PC-3 (cell line): ENCODE measurements at regions of chr17 and their contacts with region 1.

Region 1: GRCh38 chr17:75855310-75856081 is at the start of gene WBP2:
- DNase-seq: peak; percentile 100
- ATAC-seq: peak; percentile 90
- H3K4me3 ChIP-seq: peak within 1 kb of the TSS; percentile 86
- H3K27ac ChIP-seq: peak within 1 kb of the TSS; percentile 69
- H3K4me1 ChIP-seq: peaks cover 28% of the 10 kb centered on the region
- H3K27me3 ChIP-seq: no peaks in the 10 kb centered on the region
- CTCF ChIP-seq: peak; percentile 51
- total RNA-seq, gene WBP2: 49.7 and 51.8 TPM in 2 replicates

Region 2: GRCh38 chr17:75667021-75667790 is 188.3 kb before region 1 on chr17 and contains the starts of genes RECQL5 and SAP30BP:
- CTCF ChIA-PET with region 1: no interaction called
- POLR2A ChIA-PET with region 1: no interaction called
- intact Hi-C with region 1: no loop called
- DNase-seq: peak; percentile 100
- ATAC-seq: peak; percentile 100
- H3K4me3 ChIP-seq: peak within 1 kb of the TSS; percentile 88
- H3K27ac ChIP-seq: peak within 1 kb of the TSS; percentile 63
- H3K4me1 ChIP-seq: peaks cover 19% of the 10 kb centered on the region
- H3K27me3 ChIP-seq: no peaks in the 10 kb centered on the region
- CTCF ChIP-seq: no peak
- total RNA-seq, gene RECQL5: 54.2 and 97.7 TPM in 2 replicates
- total RNA-seq, gene SAP30BP: 97.8 and 115 TPM in 2 replicates

Region 3: DNA sequence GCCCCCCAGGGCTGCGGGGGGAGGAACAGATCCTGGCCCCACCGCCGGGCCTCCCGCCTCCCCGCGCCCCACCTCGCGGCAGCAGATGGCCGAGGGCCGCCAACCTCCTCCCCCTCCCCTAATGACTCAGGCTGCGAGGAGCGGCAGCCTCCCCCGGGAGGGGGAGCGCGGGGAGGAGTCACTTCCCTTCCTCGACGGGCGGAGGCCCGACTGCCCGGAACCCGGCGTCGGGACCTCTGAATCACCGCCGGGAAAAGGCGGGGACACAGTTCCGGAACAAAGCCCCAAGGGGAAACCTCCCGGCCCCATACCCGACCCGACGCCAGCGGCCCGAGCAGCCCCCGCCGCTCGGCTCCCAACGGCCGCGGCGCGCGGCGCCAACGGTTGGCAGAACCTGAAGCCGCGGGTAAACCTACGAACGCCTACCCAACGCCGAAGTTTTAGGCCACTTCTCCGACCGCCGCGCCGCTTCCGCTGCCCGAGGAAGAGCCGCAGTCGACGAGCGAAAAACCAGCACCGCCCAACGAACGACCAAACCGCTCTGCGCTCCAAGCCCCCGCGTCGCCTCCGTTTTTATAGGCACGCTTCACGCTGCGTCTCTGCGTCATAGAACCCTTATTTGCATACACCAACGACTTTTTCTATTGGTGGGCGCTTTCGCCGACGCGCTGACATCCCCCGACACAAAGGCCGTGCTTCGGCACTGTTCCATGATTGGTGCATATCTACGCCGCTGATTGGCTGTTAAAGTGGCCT is 76.1 kb before region 1 on chr17:
- CTCF ChIA-PET with region 1: interaction called, 3 read pairs
- POLR2A ChIA-PET with region 1: interaction called, 16 read pairs
- intact Hi-C with region 1: loop called (anchors 2 kb)
- DNase-seq: peak; percentile 100
- ATAC-seq: peak; percentile 54
- H3K4me3 ChIP-seq: peak overlapping the region; percentile 81
- H3K27ac ChIP-seq: peak overlapping the region; percentile 88
- H3K4me1 ChIP-seq: peaks cover 46% of the 10 kb centered on the region
- H3K27me3 ChIP-seq: no peaks in the 10 kb centered on the region
- CTCF ChIP-seq: no peak; the same call in 1 of the 2 replicates

Region 4: GRCh38 chr17:75845049-75845860 is 10.2 kb before region 1 on chr17:
- CTCF ChIA-PET with region 1: interaction called, 30 read pairs
- POLR2A ChIA-PET with region 1: interaction called, 18 read pairs
- intact Hi-C with region 1: loop called (anchors 1 kb)
- DNase-seq: peak; percentile 96
- ATAC-seq: peak; percentile 77
- H3K4me3 ChIP-seq: peak overlapping the region; percentile 49
- H3K27ac ChIP-seq: peak overlapping the region; percentile 96
- H3K4me1 ChIP-seq: peaks cover 39% of the 10 kb centered on the region
- H3K27me3 ChIP-seq: no peaks in the 10 kb centered on the region
- CTCF ChIP-seq: peak; percentile 89

Region 5: GRCh38 chr17:75877752-75878173 is 22.3 kb after region 1 on chr17:
- CTCF ChIA-PET with region 1: interaction called, 30 read pairs
- POLR2A ChIA-PET with region 1: interaction called, 29 read pairs
- intact Hi-C with region 1: loop called (anchors 1 kb)
- DNase-seq: peak; percentile 88
- ATAC-seq: peak; percentile 64
- H3K4me3 ChIP-seq: peak overlapping the region; percentile 71
- H3K27ac ChIP-seq: peak overlapping the region; percentile 92
- H3K4me1 ChIP-seq: peaks cover 24% of the 10 kb centered on the region
- H3K27me3 ChIP-seq: no peaks in the 10 kb centered on the region
- CTCF ChIP-seq: peak; percentile 40

Region 6: DNA sequence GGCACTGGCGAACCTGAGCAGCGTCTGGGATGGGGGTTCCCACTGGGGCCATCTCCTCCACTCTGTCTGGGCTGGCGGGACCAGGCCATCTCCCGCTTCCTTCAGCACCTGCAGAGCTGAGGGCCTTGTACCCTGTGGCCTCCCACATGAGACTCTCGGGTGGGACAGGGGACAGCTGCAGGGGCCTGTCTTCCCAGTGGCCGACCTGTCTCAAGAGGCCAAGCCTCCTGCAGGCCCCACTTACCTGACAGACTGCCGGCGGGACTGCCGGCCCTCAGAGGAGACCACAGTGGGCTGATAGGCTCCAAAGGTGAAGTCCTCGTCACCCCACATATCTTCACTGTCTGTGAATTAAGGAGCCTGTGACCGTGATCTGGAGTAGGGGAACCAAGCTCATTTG is 69.6 kb after region 1 on chr17:
- CTCF ChIA-PET with region 1: no interaction called
- POLR2A ChIA-PET with region 1: interaction called, 18 read pairs
- intact Hi-C with region 1: no loop called
- DNase-seq: no peak
- ATAC-seq: no peak
- H3K4me3 ChIP-seq: no peak overlapping the region
- H3K27ac ChIP-seq: no peak overlapping the region
- H3K4me1 ChIP-seq: no peaks in the 10 kb centered on the region
- H3K27me3 ChIP-seq: no peaks in the 10 kb centered on the region
- CTCF ChIP-seq: no peak

Region 7: DNA sequence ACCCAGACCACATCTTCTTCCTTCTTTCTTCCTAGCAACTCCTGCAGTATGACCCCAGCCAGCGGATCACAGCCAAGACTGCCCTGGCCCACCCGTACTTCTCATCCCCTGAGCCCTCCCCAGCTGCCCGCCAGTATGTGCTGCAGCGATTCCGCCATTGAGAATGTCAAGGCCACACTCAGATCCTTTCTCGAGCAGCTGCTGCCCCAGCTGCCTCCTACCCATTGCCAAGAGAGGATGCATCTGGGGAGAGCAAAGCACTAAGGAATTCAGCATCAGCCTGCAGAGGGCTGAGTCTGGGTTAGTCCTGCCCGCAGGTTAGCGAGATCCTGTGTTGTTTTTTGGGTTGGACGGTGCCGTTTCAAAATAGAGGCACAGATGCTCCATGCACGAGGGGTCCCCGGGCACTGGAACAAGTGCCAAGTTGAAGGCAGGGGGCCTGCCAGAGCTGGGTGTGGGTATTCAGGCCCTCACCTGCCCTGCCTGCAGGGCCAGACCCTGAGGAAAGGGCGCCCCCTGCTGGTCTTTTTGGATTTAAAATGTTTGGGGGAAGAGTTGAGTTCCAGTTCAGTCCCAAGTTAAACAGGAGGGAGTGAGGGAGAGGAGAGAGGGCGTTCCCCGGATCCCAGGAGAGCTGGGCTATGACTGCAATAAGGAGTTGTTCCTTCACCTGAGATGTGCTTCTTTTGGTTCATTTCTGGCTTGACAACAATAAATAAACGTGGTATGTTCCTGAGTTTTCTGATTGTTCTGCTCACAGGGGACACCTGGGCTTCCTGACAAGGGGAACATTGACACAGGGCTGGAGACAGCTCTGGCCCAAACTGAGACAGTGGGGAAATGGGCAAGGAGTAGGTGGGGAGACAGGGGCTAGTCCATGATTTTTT is 150.0 kb after region 1 on chr17:
- CTCF ChIA-PET with region 1: interaction called, 12 read pairs
- POLR2A ChIA-PET with region 1: no interaction called
- intact Hi-C with region 1: no loop called
- DNase-seq: peak; percentile 93
- ATAC-seq: peak; percentile 76
- H3K4me3 ChIP-seq: no peak overlapping the region
- H3K27ac ChIP-seq: no peak overlapping the region
- H3K4me1 ChIP-seq: no peaks in the 10 kb centered on the region
- H3K27me3 ChIP-seq: no peaks in the 10 kb centered on the region
- CTCF ChIP-seq: peak; percentile 97

Region 8: GRCh38 chr17:76147211-76148014 is 291.9 kb after region 1 on chr17:
- CTCF ChIA-PET with region 1: no interaction called
- POLR2A ChIA-PET with region 1: no interaction called
- intact Hi-C with region 1: no loop called
- DNase-seq: peak; percentile 78
- ATAC-seq: peak; percentile 39
- H3K4me3 ChIP-seq: no peak overlapping the region
- H3K27ac ChIP-seq: no peak overlapping the region
- H3K4me1 ChIP-seq: peaks cover 13% of the 10 kb centered on the region
- H3K27me3 ChIP-seq: no peaks in the 10 kb centered on the region
- CTCF ChIP-seq: peak; percentile 82